ENCODE measurements at regions of chr1 and their contacts with region 1.

Region 1: DNA sequence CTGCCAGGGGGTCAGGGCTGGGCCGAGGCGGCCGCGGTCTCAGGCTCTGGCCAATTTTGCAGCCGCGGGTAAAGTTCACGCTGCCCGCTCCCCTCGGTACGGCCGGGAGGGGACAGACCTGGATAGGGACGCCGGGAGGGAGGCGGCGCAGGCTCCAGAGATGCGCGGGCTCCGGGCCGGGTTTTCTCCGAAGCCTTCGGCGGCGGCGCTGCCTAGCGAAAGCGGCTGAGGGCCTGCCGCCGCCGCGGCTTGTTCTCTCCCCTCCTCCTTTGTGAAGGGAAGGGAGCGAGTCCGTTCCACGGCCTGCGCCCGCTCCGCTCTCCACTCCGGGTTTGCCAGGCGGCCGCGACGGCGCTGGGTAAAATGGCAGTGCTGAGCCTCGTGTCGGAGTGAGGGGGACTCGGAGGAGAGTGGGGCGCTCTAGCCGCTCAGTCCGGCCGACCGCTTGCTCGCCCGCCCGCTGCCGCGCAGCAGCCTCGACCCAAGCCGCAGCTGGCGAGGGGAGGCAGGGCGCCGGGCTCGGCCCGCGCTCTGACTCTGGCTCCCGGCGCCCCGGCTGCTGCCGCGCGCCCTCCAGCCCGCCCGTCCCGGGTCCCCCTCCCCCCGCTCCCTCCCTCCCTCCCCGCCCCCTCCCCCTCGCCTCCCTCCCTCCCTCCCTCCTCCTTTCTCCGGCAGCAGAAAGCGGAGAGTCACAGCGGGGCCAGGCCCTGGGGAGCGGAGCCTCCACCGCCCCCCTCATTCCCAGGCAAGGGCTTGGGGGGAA is at the start of gene ARID1A:
- DNase-seq: peak; percentile 75

Region 2: GRCh38 chr1:26472901-26473845 is 222.4 kb before region 1 on chr1:
- CTCF ChIA-PET with region 1: no interaction called
- POLR2A ChIA-PET with region 1: no interaction called
- DNase-seq: peak; percentile 96

Region 3: DNA sequence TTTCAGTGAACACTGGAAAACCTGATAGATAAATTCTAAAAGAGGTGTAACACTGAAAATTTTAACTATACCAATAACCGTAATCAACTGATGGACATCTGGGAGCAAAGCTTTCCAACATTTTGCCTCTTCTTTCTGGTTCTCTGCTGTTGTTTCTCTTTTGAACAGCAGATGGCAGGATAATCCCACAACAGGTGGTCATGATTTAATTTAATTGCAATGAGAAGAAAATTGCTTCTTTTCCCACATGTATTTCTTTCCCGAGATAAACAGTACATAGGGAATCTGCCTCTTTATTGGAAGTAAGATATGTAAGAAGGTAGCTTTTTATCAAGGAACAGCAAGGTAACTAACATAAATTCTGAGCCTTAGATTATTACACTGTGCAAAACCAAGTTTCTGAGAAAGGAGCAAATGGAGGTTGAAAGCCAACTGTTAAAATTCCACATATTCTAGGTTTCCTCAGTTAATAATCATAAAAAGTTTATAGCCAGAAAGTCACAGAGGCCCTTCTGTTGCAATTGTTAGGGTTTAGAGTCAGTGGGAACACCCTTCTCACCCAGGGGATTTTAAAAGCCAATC is 93.1 kb before region 1 on chr1:
- CTCF ChIA-PET with region 1: interaction called, 5 read pairs
- POLR2A ChIA-PET with region 1: interaction called, 13 read pairs
- DNase-seq: peak; percentile 53

Region 4: DNA sequence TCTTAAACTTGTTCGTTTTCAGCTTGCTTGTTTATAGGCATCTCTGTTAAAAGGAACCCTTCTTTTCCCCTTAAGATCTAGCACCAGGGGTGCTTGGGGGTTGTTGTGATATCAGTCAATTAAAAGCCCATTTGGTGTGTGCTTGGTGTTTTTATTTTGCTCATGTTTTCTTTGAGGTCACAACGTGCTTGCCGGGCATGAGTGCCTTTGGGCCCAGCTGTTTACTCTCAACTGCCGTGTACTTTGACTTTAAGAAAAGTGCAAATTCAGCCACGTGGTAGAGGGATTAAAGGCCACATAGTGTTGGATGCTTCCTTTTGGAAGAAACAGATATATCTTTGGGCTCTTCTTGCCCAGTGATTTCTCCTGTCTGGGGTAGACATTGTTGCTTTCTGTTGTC is 10.8 kb after region 1 on chr1:
- CTCF ChIA-PET with region 1: no interaction called
- POLR2A ChIA-PET with region 1: interaction called, 13 read pairs
- DNase-seq: no peak

Region 5: GRCh38 chr1:26723013-26723991 is 27.8 kb after region 1 on chr1:
- CTCF ChIA-PET with region 1: no interaction called
- POLR2A ChIA-PET with region 1: interaction called, 18 read pairs
- DNase-seq: peak; percentile 45

Region 6: GRCh38 chr1:26771643-26772321 is 76.2 kb after region 1 on chr1:
- CTCF ChIA-PET with region 1: no interaction called
- POLR2A ChIA-PET with region 1: interaction called, 10 read pairs
- DNase-seq: peak; percentile 25

Region 7: DNA sequence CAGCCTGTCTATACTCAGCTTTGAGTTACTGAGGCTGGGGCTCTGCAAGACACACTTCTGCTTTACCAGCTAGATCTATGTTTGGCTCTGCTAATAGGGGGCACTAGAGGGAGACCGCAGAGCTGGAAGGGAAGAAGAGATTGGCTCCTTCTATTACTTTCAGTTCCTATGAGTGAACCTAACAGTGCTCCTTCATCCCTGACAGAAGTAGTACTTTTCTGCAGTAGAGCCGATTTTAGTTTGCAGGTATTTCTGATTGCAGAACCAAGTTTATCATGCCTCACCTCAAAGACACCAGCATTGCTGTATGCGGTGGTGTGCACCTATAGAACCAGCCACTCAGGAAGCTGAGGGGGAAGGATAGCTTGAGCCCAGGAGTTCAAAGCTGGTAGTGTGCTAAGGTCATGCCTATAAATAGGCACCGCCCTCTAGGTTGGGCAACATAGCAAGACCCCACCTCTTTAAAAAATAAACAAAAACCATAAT is 125.3 kb after region 1 on chr1:
- CTCF ChIA-PET with region 1: no interaction called
- POLR2A ChIA-PET with region 1: no interaction called
- DNase-seq: no peak